GM10248 (cell line): ENCODE measurements at regions of chr17 and their contacts with region 1.

Region 1: DNA sequence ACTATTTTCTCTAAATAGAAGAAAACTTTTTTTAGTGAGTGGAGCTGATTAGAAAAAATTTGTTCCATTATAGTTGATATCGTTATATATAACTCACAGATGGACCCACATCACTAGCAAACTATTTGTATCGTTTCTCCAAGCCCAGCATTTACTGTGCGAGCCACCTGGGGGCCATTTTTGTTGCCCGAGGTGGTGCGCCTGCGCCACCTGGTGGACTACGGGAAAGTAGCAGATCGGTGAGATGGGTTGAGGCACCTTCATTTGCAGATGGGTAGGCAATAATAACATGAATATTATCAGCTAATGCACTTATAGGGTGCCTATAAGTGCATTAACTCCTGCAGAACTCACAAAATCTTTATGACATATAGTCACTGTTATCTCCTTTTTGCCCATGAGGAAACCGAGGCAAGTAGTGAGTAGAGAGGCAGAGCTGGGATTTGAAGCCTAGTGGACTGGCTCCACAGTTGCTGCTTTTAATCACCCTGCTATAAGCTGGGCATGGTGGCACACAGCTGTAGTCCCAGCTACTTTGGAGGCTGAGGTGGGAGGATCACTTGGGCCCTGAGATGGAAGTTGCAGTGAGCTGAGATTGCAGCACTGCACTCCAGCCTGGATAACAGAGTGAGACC is 23.2 kb upstream of the NTN1 start:
- DNase-seq: peak; percentile 83
- CTCF ChIP-seq: peak; percentile 95

Region 2: DNA sequence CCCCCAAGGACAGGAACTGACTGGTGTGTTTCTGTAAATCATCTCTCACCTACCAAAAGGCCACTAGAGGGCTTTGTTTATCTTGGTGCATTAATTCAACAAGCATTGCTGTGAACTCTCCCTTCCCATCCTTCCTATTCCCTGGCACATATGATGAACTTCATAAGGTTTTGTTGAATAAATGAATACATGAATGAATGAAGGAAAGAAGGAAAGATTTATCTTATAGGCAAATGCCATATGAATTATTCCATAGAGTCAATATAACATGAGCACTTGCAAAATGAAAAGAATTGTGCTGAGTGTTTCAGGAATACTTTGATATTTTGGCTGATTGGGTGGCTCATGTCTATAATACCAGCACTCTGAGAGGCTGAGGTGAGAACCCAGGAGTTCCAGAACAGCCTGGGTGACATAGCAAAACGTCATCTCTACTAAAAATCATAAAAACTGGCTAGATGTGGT is 244.1 kb before region 1 on chr17:
- CTCF ChIA-PET with region 1: interaction called, 19 read pairs
- POLR2A ChIA-PET with region 1: no interaction called
- DNase-seq: peak; percentile 68
- CTCF ChIP-seq: peak; percentile 57

Region 3: GRCh38 chr17:8894673-8895578 is 103.2 kb before region 1 on chr17:
- CTCF ChIA-PET with region 1: interaction called, 24 read pairs
- POLR2A ChIA-PET with region 1: no interaction called
- DNase-seq: peak; percentile 79
- CTCF ChIP-seq: peak; percentile 72

Region 4: GRCh38 chr17:8909586-8910270 is 88.4 kb before region 1 on chr17:
- CTCF ChIA-PET with region 1: interaction called, 29 read pairs
- POLR2A ChIA-PET with region 1: no interaction called
- DNase-seq: no peak
- CTCF ChIP-seq: no peak

Region 5: GRCh38 chr17:8930649-8931048 is 67.5 kb before region 1 on chr17:
- CTCF ChIA-PET with region 1: no interaction called
- POLR2A ChIA-PET with region 1: no interaction called
- DNase-seq: no peak
- CTCF ChIP-seq: no peak

Region 6: GRCh38 chr17:8949061-8949661 is 49.0 kb before region 1 on chr17:
- CTCF ChIA-PET with region 1: interaction called, 19 read pairs
- POLR2A ChIA-PET with region 1: interaction called, 13 read pairs
- DNase-seq: peak; percentile 52
- CTCF ChIP-seq: no peak

Region 7: DNA sequence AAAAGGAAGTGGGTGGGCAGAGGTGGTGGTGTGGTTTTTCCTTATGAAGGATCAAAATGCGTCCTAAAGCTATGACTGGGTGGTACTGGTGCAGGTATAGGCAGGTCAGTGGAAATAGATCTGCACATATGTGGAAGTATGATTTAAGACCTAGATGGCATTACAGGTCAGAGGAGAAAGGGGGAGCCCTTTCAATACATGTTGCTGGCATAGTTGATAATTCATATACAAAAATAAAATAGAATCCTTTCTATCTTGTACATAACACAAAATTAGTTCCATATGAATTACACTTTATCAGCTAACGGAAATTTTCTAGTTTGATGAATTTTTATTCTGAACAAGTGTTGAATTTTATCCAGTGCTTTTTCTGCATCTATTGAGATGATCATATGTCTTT is 11.8 kb before region 1 on chr17:
- CTCF ChIA-PET with region 1: interaction called, 75 read pairs
- POLR2A ChIA-PET with region 1: no interaction called
- DNase-seq: no peak
- CTCF ChIP-seq: no peak

Region 8: GRCh38 chr17:9021158-9021991 is 23.3 kb after region 1 on chr17 and contains the start of gene NTN1:
- CTCF ChIA-PET with region 1: interaction called, 24 read pairs
- POLR2A ChIA-PET with region 1: no interaction called
- DNase-seq: peak; percentile 87
- CTCF ChIP-seq: no peak

Region 9: DNA sequence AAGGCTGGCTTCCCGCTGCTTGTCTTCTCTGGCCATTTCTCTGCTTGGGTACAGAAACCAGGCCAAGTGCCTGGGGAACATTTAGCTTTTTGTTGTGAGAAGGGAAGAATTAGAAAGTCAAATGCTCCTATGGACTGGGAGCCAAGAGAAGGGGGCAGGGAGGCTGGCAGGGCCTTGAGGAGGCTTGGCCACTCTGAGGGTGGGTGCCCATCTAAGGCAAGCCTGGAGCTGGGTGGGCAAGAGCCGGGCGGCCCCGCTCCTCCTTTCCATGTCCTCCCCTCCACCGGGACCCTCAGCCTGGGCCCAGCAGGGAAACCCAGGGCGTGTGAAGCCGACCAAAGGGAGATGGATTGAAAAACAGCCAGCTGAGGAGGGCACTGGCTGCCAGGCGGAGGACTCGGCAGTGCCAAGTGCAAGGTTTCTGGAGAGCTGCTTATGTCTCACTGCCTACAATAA is 92.6 kb after region 1 on chr17:
- CTCF ChIA-PET with region 1: no interaction called
- POLR2A ChIA-PET with region 1: no interaction called
- DNase-seq: no peak
- CTCF ChIP-seq: no peak

Region 10: GRCh38 chr17:9150446-9151090 is 152.5 kb after region 1 on chr17:
- CTCF ChIA-PET with region 1: no interaction called
- POLR2A ChIA-PET with region 1: no interaction called
- DNase-seq: no peak
- CTCF ChIP-seq: no peak